Activated B cell treated with CpG ODN at 0.5 μM for 24 hours (primary cell): ENCODE measurements at regions of chr5 and their contacts with region 1.

Region 1: GRCh38 chr5:74648835-74649293 is 8.3 kb upstream of the ENC1 start:
- DNase-seq: no peak
- ATAC-seq: peak; percentile 78
- H3K4me3 Mint-ChIP-seq: no peak overlapping the region
- H3K27ac Mint-ChIP-seq: no peak overlapping the region
- H3K4me1 Mint-ChIP-seq: no peaks in the 10 kb centered on the region
- H3K27me3 Mint-ChIP-seq: peaks cover 7% of the 10 kb centered on the region
- CTCF ChIP-seq: peak; percentile 53

Region 2: GRCh38 chr5:73093943-73094342 is 1554.9 kb before region 1 on chr5:
- CTCF ChIA-PET with region 1: no interaction called
- POLR2A ChIA-PET with region 1: no interaction called
- intact Hi-C with region 1: no loop called
- DNase-seq: no peak
- ATAC-seq: no peak
- H3K4me3 Mint-ChIP-seq: no peak overlapping the region
- H3K27ac Mint-ChIP-seq: no peak overlapping the region
- H3K4me1 Mint-ChIP-seq: no peaks in the 10 kb centered on the region
- H3K27me3 Mint-ChIP-seq: peaks cover 2% of the 10 kb centered on the region
- CTCF ChIP-seq: no peak

Region 3: GRCh38 chr5:73591102-73591695 is 1057.7 kb before region 1 on chr5:
- CTCF ChIA-PET with region 1: interaction called, 7 read pairs
- POLR2A ChIA-PET with region 1: no interaction called
- intact Hi-C with region 1: loop called (anchors 2 kb)
- DNase-seq: no peak
- ATAC-seq: no peak
- H3K4me3 Mint-ChIP-seq: no peak overlapping the region
- H3K27ac Mint-ChIP-seq: no peak overlapping the region
- H3K4me1 Mint-ChIP-seq: no peaks in the 10 kb centered on the region
- H3K27me3 Mint-ChIP-seq: no peaks in the 10 kb centered on the region
- CTCF ChIP-seq: peak; percentile 92

Region 4: GRCh38 chr5:73902327-73903051 is 746.4 kb before region 1 on chr5:
- CTCF ChIA-PET with region 1: interaction called, 52 read pairs
- POLR2A ChIA-PET with region 1: interaction called, 4 read pairs
- intact Hi-C with region 1: loop called (anchors 1 kb)
- DNase-seq: no peak
- ATAC-seq: no peak
- H3K4me3 Mint-ChIP-seq: no peak overlapping the region
- H3K27ac Mint-ChIP-seq: no peak overlapping the region
- H3K4me1 Mint-ChIP-seq: peaks cover 5% of the 10 kb centered on the region
- H3K27me3 Mint-ChIP-seq: peaks cover 15% of the 10 kb centered on the region
- CTCF ChIP-seq: peak; percentile 69

Region 5: DNA sequence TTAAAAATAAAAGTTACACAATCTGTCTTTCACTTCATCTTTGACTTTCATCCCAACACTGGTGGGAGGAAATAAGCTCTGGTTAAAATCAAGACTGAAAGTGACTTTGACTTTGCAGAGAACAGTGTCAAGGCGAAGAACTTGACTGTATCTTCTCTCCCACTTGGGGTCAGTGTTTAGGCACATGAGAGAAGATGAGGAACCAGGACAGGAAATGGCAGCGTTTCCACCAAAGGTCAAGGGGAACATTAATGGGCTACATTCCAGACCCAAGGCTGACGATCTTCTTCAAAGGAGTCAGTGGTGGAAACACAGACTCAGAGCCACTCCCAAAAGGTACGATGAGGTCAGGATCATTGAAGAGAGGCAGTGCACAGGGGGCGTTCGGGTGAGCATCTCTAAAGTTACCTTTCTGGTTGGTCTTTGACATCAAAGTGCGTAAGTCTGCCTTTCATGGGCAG is 613.3 kb before region 1 on chr5:
- CTCF ChIA-PET with region 1: interaction called, 5 read pairs
- POLR2A ChIA-PET with region 1: no interaction called
- intact Hi-C with region 1: loop called (anchors 1 kb)
- DNase-seq: no peak
- ATAC-seq: no peak
- H3K4me3 Mint-ChIP-seq: no peak overlapping the region
- H3K27ac Mint-ChIP-seq: no peak overlapping the region
- H3K4me1 Mint-ChIP-seq: no peaks in the 10 kb centered on the region
- H3K27me3 Mint-ChIP-seq: peaks cover 5% of the 10 kb centered on the region
- CTCF ChIP-seq: no peak

Region 6: GRCh38 chr5:74394916-74395781 is 253.7 kb before region 1 on chr5:
- CTCF ChIA-PET with region 1: interaction called, 3 read pairs
- POLR2A ChIA-PET with region 1: no interaction called
- intact Hi-C with region 1: loop called (anchors 2 kb)
- DNase-seq: no peak
- ATAC-seq: no peak
- H3K4me3 Mint-ChIP-seq: no peak overlapping the region
- H3K27ac Mint-ChIP-seq: no peak overlapping the region
- H3K4me1 Mint-ChIP-seq: no peaks in the 10 kb centered on the region
- H3K27me3 Mint-ChIP-seq: no peaks in the 10 kb centered on the region
- CTCF ChIP-seq: no peak